ENCODE measurements at regions of chr1 and their contacts with region 1.

Region 1: DNA sequence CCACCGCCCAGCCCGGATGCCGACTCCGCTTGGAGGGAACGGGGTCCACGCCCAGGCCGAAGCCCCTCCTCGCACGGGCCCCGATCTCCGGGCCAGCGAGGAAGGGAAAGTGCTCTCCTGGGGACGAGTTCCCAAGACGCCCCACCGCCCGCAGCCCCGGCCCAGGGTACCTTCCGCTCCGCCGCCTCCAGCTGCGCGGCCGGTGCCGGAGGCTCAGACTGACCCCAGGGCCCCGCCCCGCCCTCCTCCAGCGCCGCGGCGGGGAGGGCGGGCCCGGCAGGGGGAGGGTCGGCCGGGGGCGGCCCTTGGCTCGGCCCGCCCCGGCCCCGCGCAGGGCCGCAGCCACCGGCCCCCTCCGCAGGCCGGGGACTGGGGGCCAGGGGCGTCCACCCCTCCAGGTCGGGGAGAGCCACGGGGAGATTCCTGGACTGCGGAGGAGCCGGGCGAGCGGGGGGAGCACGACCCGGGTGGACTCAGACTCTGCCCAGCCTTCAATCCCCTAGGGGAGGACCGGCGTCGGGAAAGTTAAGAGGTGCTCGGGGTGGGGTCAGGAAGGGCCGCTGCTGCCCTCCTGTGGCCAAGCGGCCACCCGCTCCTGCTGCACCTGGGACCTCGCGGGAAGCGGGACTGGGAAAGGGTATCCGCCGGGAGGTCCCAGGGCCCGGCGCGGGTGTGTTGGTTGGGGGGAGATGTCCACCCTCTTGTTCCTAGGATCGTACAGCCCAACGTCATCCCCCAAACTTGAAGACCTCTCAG is at the start of gene RHOC:
- DNase-seq: peak; percentile 74 to 94
- H3K4me3 ChIP-seq: peak within 1 kb of the TSS; percentile 39 to 78 (median 66)
- H3K27ac ChIP-seq: no peak within 1 kb of the TSS
- H3K4me1 ChIP-seq: peaks cover 10 to 37% (median 20%) of the 10 kb centered on the region in 4 experiments
- H3K27me3 ChIP-seq: peaks cover 0 to 10% (median 4%) of the 10 kb centered on the region in 4 experiments; a peak in 2 of 7 replicates
- CTCF ChIP-seq: peak in 2 of 3 experiments; percentile 90 to 92; a peak in 3 of 4 replicates
- EP300 ChIP-seq: peak in 1 of 2 experiments; percentile 45; a peak in 1 of 3 replicates
- POLR2A ChIP-seq: peak in 1 of 2 experiments; percentile 42; a peak in 1 of 3 replicates
- RAD21 ChIP-seq: peak; percentile 87 to 91
- total RNA-seq, gene RHOC: 53.6 and 57.6 TPM in 2 replicates

Region 2: GRCh38 chr1:112614460-112615065 is 92.5 kb before region 1 on chr1:
- CTCF ChIA-PET with region 1: interaction called, 11 read pairs
- POLR2A ChIA-PET with region 1: interaction called, 8 read pairs
- DNase-seq: no peak
- H3K4me3 ChIP-seq: no peak overlapping the region
- H3K27ac ChIP-seq: no peak overlapping the region
- H3K4me1 ChIP-seq: no peaks in the 10 kb centered on the region; a peak in 1 of 7 replicates
- H3K27me3 ChIP-seq: no peaks in the 10 kb centered on the region
- CTCF ChIP-seq: peak; percentile 17 to 41 (median 31); a peak in 3 of 4 replicates
- EP300 ChIP-seq: no peak
- POLR2A ChIP-seq: no peak
- RAD21 ChIP-seq: peak; percentile 63 to 69

Region 3: DNA sequence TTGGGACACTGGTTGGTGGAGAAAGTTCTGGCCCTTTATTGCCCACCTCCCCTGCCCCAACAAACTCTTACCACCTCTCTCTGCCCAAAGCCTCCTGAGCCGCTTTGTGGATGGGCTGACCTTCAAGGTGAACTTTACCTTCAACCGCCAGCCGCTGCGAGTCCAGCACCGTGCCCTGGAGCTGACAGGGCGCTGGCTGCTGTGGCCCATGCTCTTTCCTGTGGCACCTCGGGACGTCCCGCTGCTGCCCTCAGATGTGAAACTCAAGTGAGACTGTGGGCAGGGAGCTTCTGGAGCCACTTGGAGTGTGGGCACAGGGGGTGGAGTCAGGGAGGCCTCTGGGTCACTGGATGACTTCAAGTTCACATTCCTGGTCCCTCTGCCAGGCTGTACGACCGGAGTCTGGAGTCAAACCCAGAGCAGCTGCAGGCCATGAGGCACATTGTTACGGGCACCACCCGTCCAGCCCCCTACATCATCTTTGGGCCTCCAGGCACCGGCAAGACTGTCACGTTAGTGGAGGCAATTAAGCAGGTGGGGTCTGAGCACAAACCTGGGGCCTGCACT is 12.6 kb before region 1 on chr1:
- CTCF ChIA-PET with region 1: interaction called, 7 read pairs
- POLR2A ChIA-PET with region 1: interaction called, 23 read pairs
- DNase-seq: no peak
- H3K4me3 ChIP-seq: no peak overlapping the region
- H3K27ac ChIP-seq: no peak overlapping the region
- H3K4me1 ChIP-seq: peaks cover 0 to 13% (median 5%) of the 10 kb centered on the region in 4 experiments; a peak in 4 of 7 replicates
- H3K27me3 ChIP-seq: peaks cover 0 to 2% (median 0%) of the 10 kb centered on the region in 4 experiments; a peak in 1 of 7 replicates
- CTCF ChIP-seq: no peak
- EP300 ChIP-seq: no peak
- POLR2A ChIP-seq: no peak
- RAD21 ChIP-seq: no peak

Measured in H1 (cell line).